ENCODE measurements at regions of chr2 and their contacts with region 1.

Region 1: GRCh38 chr2:111116843-111117597 is 3.7 kb upstream of the BCL2L11 start:
- DNase-seq: peak; percentile 80
- ATAC-seq: peak; percentile 42
- H3K4me3 Mint-ChIP-seq: peak overlapping the region; percentile 95
- H3K27ac Mint-ChIP-seq: peak overlapping the region; percentile 26
- H3K4me1 Mint-ChIP-seq: peaks cover 45% of the 10 kb centered on the region
- H3K27me3 Mint-ChIP-seq: peaks cover 40% of the 10 kb centered on the region
- CTCF ChIP-seq: peak; percentile 84

Region 2: GRCh38 chr2:110843959-110844510 is 273.0 kb before region 1 on chr2:
- CTCF ChIA-PET with region 1: interaction called, 5 read pairs
- POLR2A ChIA-PET with region 1: no interaction called
- intact Hi-C with region 1: loop called (anchors 5 kb)
- DNase-seq: no peak
- ATAC-seq: no peak
- H3K4me3 Mint-ChIP-seq: no peak overlapping the region
- H3K27ac Mint-ChIP-seq: peak overlapping the region; percentile 78
- H3K4me1 Mint-ChIP-seq: peaks cover 64% of the 10 kb centered on the region
- H3K27me3 Mint-ChIP-seq: peaks cover 5% of the 10 kb centered on the region
- CTCF ChIP-seq: no peak

Region 3: DNA sequence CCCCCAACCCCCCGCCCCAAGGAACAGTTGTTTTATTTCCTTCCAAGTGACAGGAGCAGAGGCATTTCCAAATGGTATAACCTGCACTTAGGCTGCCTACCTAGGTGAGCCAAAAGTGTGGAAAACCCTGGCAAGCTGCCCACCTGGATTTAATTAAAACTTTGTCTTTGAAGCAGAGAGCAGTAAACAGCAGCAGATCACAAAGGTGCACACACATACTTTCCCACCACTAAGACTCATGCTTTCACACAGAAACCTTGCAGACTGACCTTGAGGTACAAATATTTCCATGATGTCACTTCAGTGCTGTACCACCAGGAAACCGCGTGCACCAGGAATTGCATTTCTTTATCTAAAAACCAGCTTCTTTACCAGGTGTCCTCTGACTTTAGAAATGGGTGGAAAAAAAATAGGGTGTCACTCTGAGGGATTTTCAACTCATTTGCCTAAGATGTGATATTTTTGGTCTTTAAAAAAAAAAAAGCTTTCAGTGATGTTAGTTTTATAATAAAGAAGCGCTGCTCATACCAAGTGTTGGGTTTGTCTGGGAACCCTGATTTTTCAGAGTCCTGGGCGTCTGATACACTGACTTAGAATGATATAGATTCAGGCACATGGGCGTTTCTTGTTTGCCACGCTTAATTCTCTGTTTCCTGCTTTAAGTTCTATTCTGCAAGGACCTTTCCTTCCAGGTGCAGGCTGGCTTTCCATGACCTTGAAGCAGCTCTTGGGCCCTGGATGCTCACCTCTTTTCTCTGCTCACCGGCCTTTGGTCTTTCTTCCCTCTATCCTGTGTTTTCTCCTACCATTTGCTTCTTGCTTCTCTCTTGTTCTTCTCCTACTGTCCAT is 67.0 kb before region 1 on chr2:
- CTCF ChIA-PET with region 1: no interaction called
- POLR2A ChIA-PET with region 1: interaction called, 4 read pairs
- intact Hi-C with region 1: loop called (anchors 5 kb)
- DNase-seq: peak; percentile 69
- ATAC-seq: peak; percentile 53
- H3K4me3 Mint-ChIP-seq: no peak overlapping the region
- H3K27ac Mint-ChIP-seq: peak overlapping the region; percentile 85
- H3K4me1 Mint-ChIP-seq: peaks cover 47% of the 10 kb centered on the region
- H3K27me3 Mint-ChIP-seq: peaks cover 22% of the 10 kb centered on the region
- CTCF ChIP-seq: no peak

Region 4: DNA sequence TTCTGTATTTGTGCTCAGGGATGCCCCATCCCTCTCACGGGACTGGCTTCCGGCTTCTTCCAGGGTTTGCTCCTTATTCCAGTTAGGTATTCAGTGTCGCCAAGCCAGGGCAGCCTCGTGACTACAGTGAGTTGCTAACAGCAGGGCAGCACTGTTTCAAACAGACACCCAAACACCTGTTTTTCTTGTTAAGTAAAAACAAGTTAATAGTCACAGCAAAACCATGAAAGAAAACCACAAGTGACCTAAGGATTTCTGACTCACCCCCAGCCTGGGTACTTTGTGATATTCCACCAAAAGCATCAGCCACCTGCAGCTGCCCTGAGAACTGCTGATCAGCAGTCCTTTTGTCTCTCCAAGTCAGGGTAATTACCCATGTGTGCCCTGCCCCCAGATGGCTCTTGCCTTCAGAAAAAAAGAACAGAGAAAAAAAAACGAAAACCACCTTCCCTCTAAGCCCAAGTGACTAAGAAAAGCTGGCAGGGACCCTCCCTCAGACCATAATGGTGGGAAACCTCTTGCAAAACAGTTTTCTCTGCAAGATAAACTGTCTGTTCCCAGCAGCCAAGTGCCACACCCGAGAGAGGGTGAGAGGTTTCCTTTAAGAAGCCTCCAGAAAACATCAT is 588.8 kb after region 1 on chr2:
- CTCF ChIA-PET with region 1: interaction called, 3 read pairs
- POLR2A ChIA-PET with region 1: no interaction called
- intact Hi-C with region 1: loop called (anchors 10 kb)
- DNase-seq: peak; percentile 79
- ATAC-seq: peak; percentile 90
- H3K4me3 Mint-ChIP-seq: no peak overlapping the region
- H3K27ac Mint-ChIP-seq: peak overlapping the region; percentile 71
- H3K4me1 Mint-ChIP-seq: peaks cover 27% of the 10 kb centered on the region
- H3K27me3 Mint-ChIP-seq: peaks cover 11% of the 10 kb centered on the region
- CTCF ChIP-seq: no peak